ENCODE measurements at regions of chr3 and their contacts with region 1.

Region 1: DNA sequence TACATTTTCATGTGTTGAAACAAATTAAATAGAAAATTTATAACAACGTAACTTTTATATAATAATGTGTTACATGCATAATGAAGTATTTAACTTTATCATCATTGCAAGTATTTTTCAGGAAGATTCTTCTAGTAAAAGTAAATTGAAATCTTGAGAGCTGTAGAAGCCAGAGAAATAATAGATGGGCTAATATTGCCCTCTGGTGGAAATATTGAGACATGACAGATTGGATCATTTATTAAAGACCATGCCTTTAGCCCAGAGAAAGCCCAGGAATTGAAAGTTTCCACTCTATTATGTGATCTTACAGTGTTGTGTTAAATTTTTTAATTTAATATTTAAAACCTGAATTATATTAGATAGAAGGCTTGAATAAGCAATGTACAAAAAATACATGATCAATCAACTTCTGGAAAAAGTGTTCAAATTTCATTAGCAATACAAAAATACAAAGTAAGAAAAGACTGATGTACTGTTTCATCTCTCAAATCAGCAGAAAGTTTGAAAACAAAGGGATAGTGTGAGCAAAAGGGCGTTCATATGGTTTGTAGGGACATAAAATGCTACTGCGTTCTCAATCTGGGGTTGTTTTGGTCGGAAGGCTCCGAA is 52.7 kb upstream of the SPTSSB start:
- DNase-seq: no peak
- ATAC-seq: no peak
- H3K4me3 Mint-ChIP-seq: no peak overlapping the region
- H3K27ac Mint-ChIP-seq: no peak overlapping the region
- H3K4me1 Mint-ChIP-seq: no peaks in the 10 kb centered on the region
- H3K27me3 Mint-ChIP-seq: no peaks in the 10 kb centered on the region

Region 2: DNA sequence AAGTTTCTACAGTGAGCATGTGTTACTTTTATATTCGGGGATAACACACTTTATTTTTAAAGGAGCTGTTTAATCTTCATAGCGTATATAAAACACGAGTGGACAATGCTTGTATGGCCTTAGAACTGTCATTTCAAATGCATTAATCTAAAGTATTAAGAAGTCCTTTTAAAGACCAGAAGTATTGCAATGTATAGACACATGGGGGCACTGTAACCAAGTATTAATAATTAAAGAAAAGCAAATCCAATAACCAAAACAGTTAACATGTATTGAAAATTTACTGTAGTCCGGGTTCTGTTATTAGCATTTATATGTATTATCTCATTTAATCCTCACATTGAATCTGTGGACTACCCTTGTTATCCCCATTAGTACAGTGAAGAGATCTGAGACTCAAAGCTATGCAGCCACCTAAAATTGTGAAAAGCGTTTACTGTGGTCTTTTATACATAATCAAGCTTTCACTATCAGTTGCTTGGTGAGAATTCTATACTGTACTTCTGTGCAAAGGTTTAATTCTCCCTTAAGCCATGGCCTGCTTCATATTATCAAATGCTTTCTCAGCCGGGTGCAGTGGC is 737.0 kb before region 1 on chr3:
- CTCF ChIA-PET with region 1: no interaction called
- POLR2A ChIA-PET with region 1: no interaction called
- intact Hi-C with region 1: loop called in 1 of 2 experiments (anchors 5 kb)
- DNase-seq: no peak
- ATAC-seq: no peak
- H3K4me3 Mint-ChIP-seq: no peak overlapping the region
- H3K27ac Mint-ChIP-seq: no peak overlapping the region
- H3K4me1 Mint-ChIP-seq: no peaks in the 10 kb centered on the region
- H3K27me3 Mint-ChIP-seq: peaks cover 2% of the 10 kb centered on the region

Region 3: DNA sequence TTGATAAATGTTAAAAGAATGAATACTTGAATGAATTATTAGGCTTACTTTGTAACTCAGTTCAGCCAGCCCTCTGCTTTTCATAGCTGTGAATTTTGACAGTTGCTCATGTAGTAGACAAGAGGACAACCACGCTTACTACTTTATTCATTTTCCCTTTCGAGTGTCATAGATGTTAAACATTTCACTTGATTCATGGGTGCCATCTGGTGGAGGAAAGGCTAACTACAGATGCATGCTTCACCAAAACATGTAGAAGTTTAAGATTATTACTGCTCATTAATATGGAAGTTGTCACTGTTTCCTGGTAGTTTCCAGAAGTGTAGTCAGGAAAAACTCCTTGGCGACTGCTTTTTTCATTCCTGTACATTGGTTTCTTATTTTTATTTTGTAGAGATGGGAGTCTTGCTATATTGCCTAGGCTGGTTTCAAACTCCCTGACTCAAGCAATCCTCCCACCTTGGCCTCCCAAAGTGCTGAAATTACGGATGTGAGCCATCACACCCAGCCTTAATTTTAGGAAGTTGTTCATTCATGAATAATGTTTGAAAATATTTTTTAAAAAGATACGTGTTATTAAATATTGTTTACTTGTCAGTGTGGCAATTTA is 482.0 kb before region 1 on chr3:
- CTCF ChIA-PET with region 1: no interaction called
- POLR2A ChIA-PET with region 1: no interaction called
- intact Hi-C with region 1: loop called (anchors 5 kb)
- DNase-seq: peak; percentile 82
- ATAC-seq: peak; percentile 66
- H3K4me3 Mint-ChIP-seq: no peak overlapping the region
- H3K27ac Mint-ChIP-seq: no peak overlapping the region
- H3K4me1 Mint-ChIP-seq: peaks cover 2% of the 10 kb centered on the region
- H3K27me3 Mint-ChIP-seq: no peaks in the 10 kb centered on the region

Region 4: DNA sequence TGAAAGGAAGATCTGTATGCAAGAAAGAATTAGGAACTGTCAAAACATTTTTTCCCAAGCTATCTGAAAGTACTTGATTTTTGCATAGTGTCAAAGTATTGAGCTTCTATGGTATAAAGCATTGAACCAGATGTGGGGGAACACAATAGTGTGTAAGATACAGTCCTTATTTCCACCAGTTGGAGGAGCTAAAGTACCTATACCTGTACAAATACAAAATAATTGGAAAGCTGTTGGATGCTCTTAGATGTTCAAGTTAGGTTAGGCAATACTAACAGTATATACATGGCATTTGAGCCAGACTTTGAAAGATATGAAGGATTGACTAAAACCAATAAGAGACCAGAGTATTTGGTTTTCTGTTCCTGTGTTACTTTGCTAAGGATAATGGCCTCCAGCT is 467.2 kb before region 1 on chr3:
- CTCF ChIA-PET with region 1: no interaction called
- POLR2A ChIA-PET with region 1: no interaction called
- intact Hi-C with region 1: loop called in 1 of 2 experiments (anchors 2 kb)
- DNase-seq: no peak
- ATAC-seq: no peak
- H3K4me3 Mint-ChIP-seq: no peak overlapping the region
- H3K27ac Mint-ChIP-seq: no peak overlapping the region
- H3K4me1 Mint-ChIP-seq: no peaks in the 10 kb centered on the region
- H3K27me3 Mint-ChIP-seq: peaks cover 2% of the 10 kb centered on the region

Region 5: GRCh38 chr3:161366094-161366493 is 57.9 kb before region 1 on chr3:
- CTCF ChIA-PET with region 1: no interaction called
- POLR2A ChIA-PET with region 1: no interaction called
- intact Hi-C with region 1: no loop called
- DNase-seq: no peak
- ATAC-seq: no peak
- H3K4me3 Mint-ChIP-seq: no peak overlapping the region
- H3K27ac Mint-ChIP-seq: no peak overlapping the region
- H3K4me1 Mint-ChIP-seq: no peaks in the 10 kb centered on the region
- H3K27me3 Mint-ChIP-seq: peaks cover 18% of the 10 kb centered on the region

Region 6: DNA sequence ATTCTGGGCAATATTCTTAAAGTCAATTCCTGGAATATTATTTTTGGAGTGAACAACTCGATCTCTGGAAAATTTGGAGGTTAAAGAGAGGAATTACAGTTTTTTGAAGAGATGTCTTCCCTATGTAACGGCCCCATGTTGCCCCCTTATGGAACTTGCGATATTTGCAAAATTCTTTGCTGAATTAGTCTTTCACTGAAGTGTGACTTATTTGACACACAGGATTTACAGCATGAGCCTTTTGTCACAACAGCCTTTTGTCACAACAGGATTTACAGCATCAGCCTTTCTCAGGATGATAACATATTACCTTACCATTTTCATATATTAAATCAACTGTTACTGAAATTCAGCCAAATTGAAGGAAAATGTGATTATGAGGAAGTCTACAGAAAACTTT is 14.9 kb before region 1 on chr3:
- CTCF ChIA-PET with region 1: interaction called, 9 read pairs
- POLR2A ChIA-PET with region 1: interaction called, 10 read pairs
- intact Hi-C with region 1: no loop called
- DNase-seq: peak; percentile 53
- ATAC-seq: no peak
- H3K4me3 Mint-ChIP-seq: no peak overlapping the region
- H3K27ac Mint-ChIP-seq: no peak overlapping the region
- H3K4me1 Mint-ChIP-seq: peaks cover 24% of the 10 kb centered on the region
- H3K27me3 Mint-ChIP-seq: peaks cover 2% of the 10 kb centered on the region

Region 7: DNA sequence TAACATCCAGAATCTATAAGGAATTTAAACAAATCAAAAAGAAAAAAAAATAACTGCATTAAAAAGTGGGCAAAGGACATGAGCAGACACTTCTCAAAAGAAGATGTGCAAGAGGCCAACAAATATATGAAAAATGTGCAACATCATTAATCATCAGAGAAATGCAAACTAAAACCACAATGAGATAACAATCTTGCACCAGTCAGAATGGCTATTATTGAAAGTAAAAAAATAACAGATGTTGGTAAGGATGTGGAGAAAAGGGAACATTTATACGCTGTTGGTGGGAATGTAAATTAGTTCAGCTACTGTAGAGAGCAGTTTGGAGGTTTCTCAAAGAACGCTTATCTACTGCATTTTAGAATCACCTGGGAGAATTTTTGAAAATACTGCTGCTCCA is 258.7 kb after region 1 on chr3:
- CTCF ChIA-PET with region 1: no interaction called
- POLR2A ChIA-PET with region 1: no interaction called
- intact Hi-C with region 1: no loop called
- DNase-seq: no peak
- ATAC-seq: no peak
- H3K4me3 Mint-ChIP-seq: no peak overlapping the region
- H3K27ac Mint-ChIP-seq: no peak overlapping the region
- H3K4me1 Mint-ChIP-seq: no peaks in the 10 kb centered on the region
- H3K27me3 Mint-ChIP-seq: no peaks in the 10 kb centered on the region